Kidney (tissue), 22 donors: ENCODE measurements at regions of chr2 and their contacts with region 1.

Region 1: GRCh38 chr2:28958689-28959088 is 22.4 kb upstream of the TOGARAM2 start:
- DNase-seq: peak; percentile 74 to 91 (median 84)
- H3K4me3 ChIP-seq: no peak overlapping the region
- H3K27ac ChIP-seq: no peak overlapping the region
- H3K4me1 ChIP-seq: peaks cover 0 to 3% (median 0%) of the 10 kb centered on the region in 3 donors
- H3K27me3 ChIP-seq: no peaks in the 10 kb centered on the region
- CTCF ChIP-seq: peak; percentile 69

Region 2: GRCh38 chr2:28855193-28855592 is 103.5 kb before region 1 on chr2:
- intact Hi-C with region 1: no loop called
- DNase-seq: no peak
- H3K4me3 ChIP-seq: no peak overlapping the region
- H3K27ac ChIP-seq: no peak overlapping the region
- H3K4me1 ChIP-seq: no peaks in the 10 kb centered on the region
- H3K27me3 ChIP-seq: no peaks in the 10 kb centered on the region
- CTCF ChIP-seq: no peak

Region 3: GRCh38 chr2:29196792-29197788 is 238.4 kb after region 1 on chr2:
- intact Hi-C with region 1: loop called (anchors 5 kb)
- DNase-seq: peak in 4 of 5 donors; percentile 71 to 84 (median 78)
- H3K4me3 ChIP-seq: no peak overlapping the region
- H3K27ac ChIP-seq: no peak overlapping the region
- H3K4me1 ChIP-seq: no peaks in the 10 kb centered on the region
- H3K27me3 ChIP-seq: no peaks in the 10 kb centered on the region
- CTCF ChIP-seq: peak; percentile 82